BJ (cell line): ENCODE measurements at regions of chr14 and their contacts with region 1.

Region 1: DNA sequence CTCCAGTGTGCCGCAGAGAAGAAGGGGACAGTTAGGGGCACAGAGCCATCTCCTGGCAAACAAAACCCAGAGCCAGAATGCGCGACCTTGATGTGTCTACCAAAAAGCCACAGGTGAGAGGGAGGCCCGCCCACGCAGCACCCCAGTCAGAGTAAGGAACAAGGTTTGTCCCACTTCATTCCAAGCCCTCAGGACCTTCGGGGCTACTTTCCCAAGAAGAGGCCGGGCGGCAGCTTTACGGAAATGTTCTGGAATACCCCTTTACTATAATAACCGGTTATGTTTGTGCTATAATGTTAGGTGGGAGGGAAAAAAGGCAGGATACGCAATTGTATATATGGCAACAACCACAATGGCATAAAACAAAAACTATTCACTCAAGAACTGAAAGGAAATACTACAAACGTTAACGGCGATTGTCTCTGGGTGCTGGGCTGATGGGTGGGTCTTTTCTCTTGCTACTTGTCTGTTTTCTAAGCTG is 12.3 kb downstream of the CCDC88C start:
- DNase-seq: no peak
- H3K4me3 ChIP-seq: no peak overlapping the region
- H3K27me3 ChIP-seq: no peaks in the 10 kb centered on the region; the same call in 1 of the 2 replicates
- CTCF ChIP-seq: no peak

Region 2: DNA sequence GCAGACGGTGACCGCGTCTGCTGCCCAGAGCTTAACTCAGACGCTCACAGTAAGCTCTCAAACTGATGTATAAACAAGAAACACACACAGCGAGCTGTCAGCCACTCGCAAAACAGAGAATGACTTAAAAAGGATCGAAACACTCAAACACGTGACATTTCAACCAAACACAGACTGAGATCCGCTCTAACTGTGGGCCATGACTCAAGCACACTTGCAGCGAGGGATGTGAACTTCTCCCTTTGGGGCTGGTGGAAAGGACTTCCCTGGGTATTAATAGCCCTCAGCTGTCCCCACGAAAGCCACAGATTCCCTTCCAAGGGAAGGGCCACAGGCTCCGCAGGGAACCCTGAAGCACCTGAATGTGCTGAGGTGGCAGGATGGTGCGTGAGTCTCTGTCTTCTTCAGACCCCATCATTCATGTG is 16.7 kb before region 1 on chr14:
- CTCF ChIA-PET with region 1: no interaction called
- POLR2A ChIA-PET with region 1: no interaction called
- DNase-seq: no peak
- H3K4me3 ChIP-seq: no peak overlapping the region
- H3K27me3 ChIP-seq: no peaks in the 10 kb centered on the region; the same call in 1 of the 2 replicates
- CTCF ChIP-seq: no peak

Region 3: DNA sequence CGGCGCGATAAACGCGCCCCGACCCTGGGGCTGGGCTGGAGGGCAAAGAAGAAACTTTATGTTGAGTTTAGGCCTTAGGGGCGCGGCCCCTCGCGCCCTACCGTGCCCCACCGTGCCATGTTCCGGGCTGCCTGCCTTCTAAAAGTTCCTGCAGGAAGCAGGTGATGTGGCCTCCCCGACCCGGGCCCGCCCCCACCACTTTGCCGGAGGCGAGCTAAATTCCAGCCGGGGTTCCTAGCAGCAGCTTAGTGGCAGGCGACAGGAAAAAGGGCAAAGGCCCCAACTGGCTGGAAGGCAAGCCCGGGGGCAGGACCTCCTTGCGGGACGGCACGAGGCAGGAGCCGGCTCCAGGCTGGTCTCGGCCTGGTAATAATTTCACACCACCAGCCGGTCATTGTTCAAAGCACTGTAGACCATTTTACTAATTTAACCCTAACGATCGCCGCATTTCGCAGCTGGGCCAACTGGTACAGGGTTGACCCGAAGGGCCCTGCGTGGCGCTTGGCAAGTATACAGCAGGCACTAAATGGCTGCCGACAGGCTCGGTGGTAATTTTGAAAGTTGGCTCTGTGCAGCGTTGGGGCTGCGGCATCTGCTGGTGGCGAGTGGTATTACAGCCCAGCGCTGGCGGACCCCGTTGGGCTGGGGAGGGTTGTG is 13.2 kb after region 1 on chr14:
- CTCF ChIA-PET with region 1: interaction called, 10 read pairs
- POLR2A ChIA-PET with region 1: no interaction called
- DNase-seq: no peak
- H3K4me3 ChIP-seq: 0 out of 2 replicates have a peak overlapping the region, but pooled peaks have one; percentile 23
- H3K27me3 ChIP-seq: peaks cover 16% of the 10 kb centered on the region
- CTCF ChIP-seq: peak; percentile 95

Region 4: GRCh38 chr14:91501951-91502930 is 97.0 kb after region 1 on chr14:
- CTCF ChIA-PET with region 1: no interaction called
- POLR2A ChIA-PET with region 1: no interaction called
- DNase-seq: no peak
- H3K4me3 ChIP-seq: no peak overlapping the region
- H3K27me3 ChIP-seq: no peaks in the 10 kb centered on the region
- CTCF ChIP-seq: no peak

Region 5: DNA sequence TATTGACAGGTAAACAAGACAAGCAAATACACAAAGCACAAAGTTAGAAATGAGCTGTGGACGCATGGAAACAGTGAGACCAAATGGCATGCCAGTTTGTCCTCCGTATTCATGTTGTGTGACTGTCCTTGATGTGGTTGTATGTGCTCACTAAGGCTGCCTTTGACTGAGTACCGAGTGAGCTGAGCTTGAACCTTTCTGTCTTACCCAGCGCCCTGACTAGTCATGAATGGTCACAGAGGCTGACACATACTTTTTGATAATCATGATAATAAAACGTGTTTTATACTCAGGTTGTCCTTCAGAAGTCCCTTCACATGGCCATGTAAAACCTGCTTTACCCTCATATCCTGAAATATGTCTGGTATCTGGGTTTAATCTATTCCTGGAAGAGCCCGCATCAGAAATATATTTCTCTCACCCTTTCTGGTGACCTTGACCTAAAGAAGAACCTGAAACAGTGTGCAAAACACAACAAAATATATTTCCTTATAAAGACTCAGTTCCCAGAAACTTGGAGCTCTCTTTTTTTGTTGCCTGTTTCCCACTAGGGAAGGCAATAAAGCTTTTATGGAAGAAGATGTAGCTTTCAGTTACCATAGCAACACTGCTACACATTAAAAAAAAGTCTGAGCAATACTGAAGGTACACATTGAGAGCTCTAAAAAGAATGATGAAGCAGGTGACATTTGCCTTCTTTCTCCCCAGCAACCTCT is 327.3 kb after region 1 on chr14:
- CTCF ChIA-PET with region 1: no interaction called
- POLR2A ChIA-PET with region 1: no interaction called
- DNase-seq: no peak
- H3K4me3 ChIP-seq: no peak overlapping the region
- H3K27me3 ChIP-seq: no peaks in the 10 kb centered on the region
- CTCF ChIP-seq: no peak

Region 6: DNA sequence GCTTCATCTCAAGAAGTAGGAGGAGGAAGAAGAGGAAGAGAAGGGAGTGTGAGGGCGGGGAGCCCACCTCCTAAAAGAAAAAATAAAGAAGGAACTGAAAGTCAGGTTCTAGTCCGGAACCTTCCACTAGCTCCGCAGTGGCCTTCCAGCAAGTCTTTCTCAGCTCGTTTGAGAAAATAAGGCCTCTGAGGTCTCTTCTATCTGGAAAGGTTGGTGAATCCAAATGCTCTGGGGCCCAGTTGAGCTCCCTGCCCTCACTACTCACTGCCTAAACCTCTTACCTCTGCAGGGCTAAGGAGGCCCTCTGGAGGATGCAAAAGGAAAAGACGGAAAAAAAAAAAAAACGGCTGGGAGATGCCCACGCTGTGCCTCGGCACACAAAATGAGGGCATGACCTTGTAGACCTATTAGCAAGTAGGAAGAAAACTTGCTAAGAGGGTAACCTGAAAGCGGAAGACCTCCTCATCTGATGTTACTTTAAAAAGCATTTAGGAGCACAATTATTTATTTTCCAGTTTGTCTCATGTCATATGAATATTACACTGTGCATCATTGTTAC is 506.3 kb after region 1 on chr14:
- CTCF ChIA-PET with region 1: no interaction called
- POLR2A ChIA-PET with region 1: no interaction called
- DNase-seq: no peak
- H3K4me3 ChIP-seq: no peak overlapping the region
- H3K27me3 ChIP-seq: no peaks in the 10 kb centered on the region
- CTCF ChIP-seq: peak; percentile 46